ENCODE measurements at regions of chr19 and their contacts with region 1.

Region 1: GRCh38 chr19:892243-893050 is 540 bp downstream of the MED16 start:
- DNase-seq: peak in 2 of 14 experiments; percentile 33 to 52
- ATAC-seq: peak; percentile 44
- H3K4me3 ChIP-seq: peak overlapping the region; percentile 69
- H3K4me3 Mint-ChIP-seq: peak overlapping the region; percentile 93
- H3K27ac ChIP-seq: peak overlapping the region; percentile 58 to 92
- H3K27ac Mint-ChIP-seq: peak overlapping the region; percentile 98
- H3K4me1 ChIP-seq: peaks cover 25% of the 10 kb centered on the region
- H3K4me1 Mint-ChIP-seq: peaks cover 25% of the 10 kb centered on the region
- H3K27me3 ChIP-seq: no peaks in the 10 kb centered on the region
- H3K27me3 Mint-ChIP-seq: peaks cover 3% of the 10 kb centered on the region
- CTCF ChIP-seq: no peak

Region 2: GRCh38 chr19:872266-872951 is 20.0 kb before region 1 on chr19:
- CTCF ChIA-PET with region 1: interaction called, 4 read pairs
- POLR2A ChIA-PET with region 1: interaction called, 8 read pairs
- intact Hi-C with region 1: loop called (anchors 2 kb)
- DNase-seq: peak; percentile 72 to 93 (median 80)
- ATAC-seq: peak; percentile 82
- H3K4me3 ChIP-seq: peak overlapping the region; percentile 58
- H3K4me3 Mint-ChIP-seq: peak overlapping the region; percentile 89
- H3K27ac ChIP-seq: peak overlapping the region; percentile 41 to 62
- H3K27ac Mint-ChIP-seq: peak overlapping the region; percentile 94
- H3K4me1 ChIP-seq: peaks cover 16% of the 10 kb centered on the region
- H3K4me1 Mint-ChIP-seq: peaks cover 18% of the 10 kb centered on the region
- H3K27me3 ChIP-seq: no peaks in the 10 kb centered on the region
- H3K27me3 Mint-ChIP-seq: no peaks in the 10 kb centered on the region
- CTCF ChIP-seq: no peak

Region 3: DNA sequence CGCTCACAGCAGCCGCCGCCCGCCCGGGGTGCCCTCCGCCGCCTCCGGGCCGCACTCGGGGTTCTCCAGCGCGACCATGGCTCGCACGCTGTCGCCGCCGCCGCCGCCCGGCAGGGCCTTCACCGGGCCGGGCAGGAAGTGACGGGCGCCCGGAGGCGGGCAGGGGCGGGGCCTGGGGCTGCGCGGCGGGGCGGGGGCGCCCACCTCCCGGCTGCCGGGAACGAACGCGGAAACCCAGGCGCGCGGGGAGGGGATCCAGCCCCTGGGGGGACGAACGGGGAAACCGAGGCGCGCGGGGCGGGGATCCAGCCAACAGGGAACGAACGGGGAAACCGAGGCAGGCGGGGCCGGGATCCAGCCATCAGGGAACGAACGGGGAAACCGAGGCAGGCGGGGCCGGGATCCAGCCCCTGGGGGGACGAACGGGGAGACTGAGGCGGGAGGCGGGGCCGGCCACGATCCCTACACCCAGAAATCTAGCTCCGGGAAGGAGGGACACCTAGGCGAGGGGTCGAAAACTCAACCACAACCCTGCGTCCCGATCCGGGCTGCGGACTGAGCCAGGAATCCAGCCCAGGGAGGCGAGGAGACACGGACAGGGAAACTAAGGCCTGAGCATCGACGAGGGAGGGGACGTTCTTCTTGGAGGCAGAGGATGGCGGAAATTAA is 20.8 kb after region 1 on chr19 and contains the start of gene R3HDM4:
- CTCF ChIA-PET with region 1: interaction called, 3 read pairs
- POLR2A ChIA-PET with region 1: interaction called, 183 read pairs
- intact Hi-C with region 1: loop called (anchors 1 kb)
- DNase-seq: peak; percentile 73 to 93 (median 84)
- ATAC-seq: peak; percentile 37
- H3K4me3 ChIP-seq: peak within 1 kb of the TSS; percentile 95
- H3K4me3 Mint-ChIP-seq: peak within 1 kb of the TSS; percentile 91
- H3K27ac ChIP-seq: peak within 1 kb of the TSS; percentile 98
- H3K27ac Mint-ChIP-seq: peak within 1 kb of the TSS; percentile 94
- H3K4me1 ChIP-seq: peaks cover 70% of the 10 kb centered on the region
- H3K4me1 Mint-ChIP-seq: peaks cover 28% of the 10 kb centered on the region
- H3K27me3 ChIP-seq: peaks cover 8 to 14% of the 10 kb centered on the region in 2 experiments
- H3K27me3 Mint-ChIP-seq: peaks cover 3% of the 10 kb centered on the region
- CTCF ChIP-seq: no peak
- total RNA-seq, gene R3HDM4: 309 to 313 TPM

Region 4: DNA sequence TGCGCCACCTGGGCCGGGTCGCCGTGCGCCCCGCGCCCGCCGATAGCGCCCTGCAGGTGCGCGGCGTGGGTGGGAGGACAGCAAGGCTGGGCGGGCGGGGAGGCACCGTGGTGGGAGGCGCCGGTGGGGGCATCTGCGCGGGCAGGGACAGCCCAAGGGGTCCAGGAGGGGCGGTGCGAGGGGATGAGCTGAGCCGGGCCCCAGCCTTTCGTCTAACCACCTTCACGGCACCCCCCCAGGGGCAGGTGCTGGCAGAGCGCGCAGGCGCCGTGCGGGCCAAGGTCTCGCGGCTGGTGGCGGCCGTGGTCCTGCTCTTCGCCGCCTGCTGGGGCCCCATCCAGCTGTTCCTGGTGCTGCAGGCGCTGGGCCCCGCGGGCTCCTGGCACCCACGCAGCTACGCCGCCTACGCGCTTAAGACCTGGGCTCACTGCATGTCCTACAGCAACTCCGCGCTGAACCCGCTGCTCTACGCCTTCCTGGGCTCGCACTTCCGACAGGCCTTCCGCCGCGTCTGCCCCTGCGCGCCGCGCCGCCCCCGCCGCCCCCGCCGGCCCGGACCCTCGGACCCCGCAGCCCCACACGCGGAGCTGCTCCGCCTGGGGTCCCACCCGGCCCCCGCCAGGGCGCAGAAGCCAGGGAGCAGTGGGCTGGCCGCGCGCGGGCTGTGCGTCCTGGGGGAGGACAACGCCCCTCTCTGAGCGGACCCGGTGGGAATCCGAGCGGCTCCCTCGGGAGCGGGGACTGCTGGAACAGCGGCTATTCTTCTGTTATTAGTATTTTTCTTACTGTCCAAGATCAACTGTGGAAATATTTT is 27.8 kb after region 1 on chr19:
- CTCF ChIA-PET with region 1: interaction called, 12 read pairs
- POLR2A ChIA-PET with region 1: interaction called, 20 read pairs
- intact Hi-C with region 1: no loop called
- DNase-seq: peak; percentile 54 to 91 (median 72)
- ATAC-seq: peak; percentile 51
- H3K4me3 ChIP-seq: peak overlapping the region; percentile 43
- H3K4me3 Mint-ChIP-seq: peak overlapping the region; percentile 96
- H3K27ac ChIP-seq: peak overlapping the region in 1 of 2 donors; percentile 41
- H3K27ac Mint-ChIP-seq: peak overlapping the region; percentile 96
- H3K4me1 ChIP-seq: peaks cover 62% of the 10 kb centered on the region
- H3K4me1 Mint-ChIP-seq: peaks cover 21% of the 10 kb centered on the region
- H3K27me3 ChIP-seq: peaks cover 11 to 22% of the 10 kb centered on the region in 2 experiments
- H3K27me3 Mint-ChIP-seq: peaks cover 4% of the 10 kb centered on the region
- CTCF ChIP-seq: no peak

Region 5: GRCh38 chr19:1154731-1155351 is 262.4 kb after region 1 on chr19:
- CTCF ChIA-PET with region 1: no interaction called
- POLR2A ChIA-PET with region 1: no interaction called
- intact Hi-C with region 1: no loop called
- DNase-seq: peak in 2 of 14 experiments; percentile 55 to 60
- ATAC-seq: no peak
- H3K4me3 ChIP-seq: no peak overlapping the region
- H3K4me3 Mint-ChIP-seq: no peak overlapping the region
- H3K27ac ChIP-seq: no peak overlapping the region
- H3K27ac Mint-ChIP-seq: no peak overlapping the region
- H3K4me1 ChIP-seq: peaks cover 14% of the 10 kb centered on the region
- H3K4me1 Mint-ChIP-seq: no peaks in the 10 kb centered on the region
- H3K27me3 ChIP-seq: no peaks in the 10 kb centered on the region
- H3K27me3 Mint-ChIP-seq: no peaks in the 10 kb centered on the region
- CTCF ChIP-seq: no peak